Activated CD8-positive, alpha-beta T cell treated with anti-CD3 and anti-CD28 coated beads for 36 hours (primary cell): ENCODE measurements at regions of chr16 and their contacts with region 1.

Region 1: DNA sequence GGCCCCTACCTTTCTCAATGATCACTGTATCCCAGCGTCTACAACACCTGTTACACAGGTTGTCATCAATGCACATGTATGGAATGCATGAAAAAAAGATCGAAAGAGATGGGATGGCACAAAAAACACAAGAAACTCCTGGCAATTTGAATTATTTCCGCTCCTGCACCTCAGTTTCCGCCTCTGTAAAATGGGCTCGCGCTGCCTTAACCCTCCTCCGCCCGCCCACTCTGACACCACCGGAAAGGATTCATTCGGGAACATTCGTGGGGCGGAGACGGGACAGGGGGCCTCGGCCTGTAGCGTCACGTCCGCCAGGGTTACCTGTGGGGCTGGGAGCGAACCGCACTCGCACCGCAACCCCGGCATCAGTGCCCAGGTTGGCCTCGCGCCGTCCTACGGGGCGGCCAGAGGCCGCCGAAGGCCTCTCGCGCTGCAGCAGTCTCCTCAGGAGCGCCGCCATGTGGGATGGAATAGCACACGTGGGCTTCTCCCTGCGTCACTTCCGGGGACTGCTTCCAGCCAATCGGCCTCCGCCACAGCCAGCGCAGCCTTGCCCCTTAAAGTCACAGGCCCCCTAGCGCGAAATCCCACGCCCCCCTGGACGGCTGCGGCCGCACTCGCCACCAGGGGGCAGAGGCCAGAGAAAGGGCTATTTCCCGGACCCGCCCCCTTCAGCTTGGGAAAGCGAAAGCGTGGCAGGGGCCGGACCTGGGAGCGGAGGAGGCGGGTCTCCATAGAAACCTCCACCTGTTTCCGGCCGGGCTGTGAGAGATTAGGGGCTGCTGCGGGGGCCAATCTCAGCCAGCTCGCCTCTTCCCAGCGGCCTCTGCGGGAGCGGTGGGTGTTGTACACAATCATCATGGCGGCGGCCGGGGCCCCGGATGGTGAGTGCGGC is at the starts of genes EARS2 and UBFD1:
- DNase-seq: peak; percentile 99
- ATAC-seq: peak; percentile 91
- H3K4me3 Mint-ChIP-seq: peak within 1 kb of the TSS; percentile 97
- H3K27ac Mint-ChIP-seq: peak within 1 kb of the TSS; percentile 90
- H3K4me1 Mint-ChIP-seq: peaks cover 49% of the 10 kb centered on the region
- H3K27me3 Mint-ChIP-seq: no peaks in the 10 kb centered on the region
- CTCF ChIP-seq: peak; percentile 83
- total RNA-seq, gene EARS2: 25.7 to 29.1 TPM
- total RNA-seq, gene UBFD1: 51.8 to 54.1 TPM

Region 2: DNA sequence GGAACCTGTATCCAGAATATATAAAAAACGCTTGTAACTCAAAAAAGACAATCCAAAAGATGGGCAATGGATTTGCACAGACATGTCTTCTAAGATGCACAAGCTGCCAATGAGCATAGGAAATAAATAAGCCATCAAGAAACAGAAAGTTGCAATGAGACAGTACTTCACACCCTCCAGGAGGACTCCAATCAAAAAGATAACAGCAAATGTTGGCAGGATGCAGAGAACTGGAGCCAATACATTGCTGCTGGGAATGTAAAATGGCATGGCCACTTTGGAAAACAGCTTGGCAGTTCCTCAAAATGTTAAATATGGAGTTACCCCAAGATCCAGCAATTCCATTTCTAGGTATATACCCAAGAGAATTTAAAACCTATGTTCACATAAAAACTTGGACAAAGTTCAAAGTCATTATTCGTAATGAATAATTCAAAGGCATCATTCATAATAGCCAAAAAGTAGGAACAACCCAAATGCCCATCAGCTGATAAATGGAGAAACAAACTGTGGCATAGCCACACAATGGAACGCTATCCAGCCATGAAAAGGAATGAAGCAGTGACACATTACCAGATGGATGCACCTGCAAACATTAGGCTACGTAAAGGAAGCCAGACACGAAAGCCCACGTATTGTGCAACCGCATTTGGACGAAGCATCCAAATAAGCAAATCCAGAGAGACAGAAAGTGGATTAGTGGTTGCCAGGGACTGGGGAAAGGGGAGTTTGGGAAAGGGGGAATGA is 72.4 kb before region 1 on chr16:
- CTCF ChIA-PET with region 1: no interaction called
- POLR2A ChIA-PET with region 1: no interaction called
- intact Hi-C with region 1: no loop called
- DNase-seq: no peak
- ATAC-seq: no peak
- H3K4me3 Mint-ChIP-seq: no peak overlapping the region
- H3K27ac Mint-ChIP-seq: no peak overlapping the region
- H3K4me1 Mint-ChIP-seq: peaks cover 3% of the 10 kb centered on the region
- H3K27me3 Mint-ChIP-seq: no peaks in the 10 kb centered on the region
- CTCF ChIP-seq: no peak

Region 3: DNA sequence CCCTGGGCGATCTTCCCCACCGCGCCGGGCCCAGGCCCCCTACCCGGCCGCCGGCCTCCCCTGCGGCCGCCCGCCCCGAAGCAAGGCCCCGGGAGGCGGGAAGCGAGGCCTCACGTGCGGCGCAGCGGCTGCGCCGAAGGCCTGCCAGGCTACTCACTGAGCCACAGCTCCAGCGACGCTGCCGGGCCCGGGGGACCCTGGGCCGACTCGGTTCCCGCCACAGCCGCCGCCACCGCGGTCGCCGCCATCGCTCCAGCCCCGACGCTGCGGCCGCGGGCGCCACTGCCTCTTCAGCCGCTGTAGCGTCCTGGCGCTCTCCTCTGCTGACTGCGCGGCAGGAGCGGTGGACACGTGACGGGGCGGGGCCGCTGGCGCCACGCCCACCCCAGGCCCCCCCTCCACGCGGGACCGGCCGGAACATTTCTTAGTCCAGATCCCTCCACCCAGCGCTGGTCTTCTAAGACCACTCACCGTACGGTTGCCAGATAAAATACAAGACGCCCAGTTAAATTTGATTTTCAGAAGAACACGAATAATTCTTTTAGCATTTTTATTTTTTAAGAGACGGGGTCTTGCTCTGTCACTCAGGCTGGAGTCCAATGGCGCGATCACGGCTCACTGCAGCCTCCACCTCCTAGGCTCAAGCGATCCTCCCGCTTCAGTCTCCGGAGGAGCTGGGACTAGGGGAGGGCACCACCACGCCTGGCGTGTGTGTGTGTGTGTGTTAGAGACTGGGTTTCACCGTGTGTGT is 46.8 kb before region 1 on chr16 and contains the start of gene GGA2:
- CTCF ChIA-PET with region 1: interaction called, 4 read pairs
- POLR2A ChIA-PET with region 1: interaction called, 11 read pairs
- intact Hi-C with region 1: no loop called
- DNase-seq: peak; percentile 77
- ATAC-seq: peak; percentile 83
- H3K4me3 Mint-ChIP-seq: peak within 1 kb of the TSS; percentile 92
- H3K27ac Mint-ChIP-seq: peak within 1 kb of the TSS; percentile 86
- H3K4me1 Mint-ChIP-seq: peaks cover 43% of the 10 kb centered on the region
- H3K27me3 Mint-ChIP-seq: no peaks in the 10 kb centered on the region
- CTCF ChIP-seq: no peak
- total RNA-seq, gene GGA2: 91.0 to 96.9 TPM

Region 4: DNA sequence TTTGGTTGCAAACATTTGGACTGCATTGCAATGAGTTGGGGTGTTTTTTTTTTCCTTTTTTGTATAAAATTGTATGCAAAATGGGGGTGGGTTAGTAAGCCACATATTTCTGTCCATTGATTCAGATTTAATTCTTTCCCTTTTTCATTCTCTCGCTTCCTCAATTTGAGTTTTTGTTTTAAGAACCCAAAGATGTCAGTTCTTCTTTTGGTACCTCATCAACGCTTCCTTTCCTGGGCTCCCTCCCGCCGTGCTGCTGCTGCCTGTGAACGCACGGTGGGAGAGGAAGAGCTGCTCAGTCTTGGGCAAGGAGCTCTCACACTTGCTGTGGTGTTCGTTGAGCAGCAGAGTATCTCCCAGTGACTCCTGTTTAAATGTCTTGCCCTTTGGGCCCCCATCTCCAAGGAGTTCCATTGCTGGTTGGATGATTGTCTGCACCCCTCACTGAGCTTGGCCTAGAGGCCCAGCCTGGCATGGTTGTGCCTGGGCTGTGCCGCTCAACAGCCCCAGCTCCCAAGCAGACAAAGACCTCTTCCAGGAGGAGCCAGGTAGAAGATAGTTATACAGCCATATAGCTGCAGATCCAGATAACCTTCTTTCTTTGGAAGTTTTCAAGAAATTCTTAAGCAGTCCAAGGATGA is 14.0 kb after region 1 on chr16:
- CTCF ChIA-PET with region 1: interaction called, 4 read pairs
- POLR2A ChIA-PET with region 1: interaction called, 12 read pairs
- intact Hi-C with region 1: no loop called
- DNase-seq: no peak
- ATAC-seq: no peak
- H3K4me3 Mint-ChIP-seq: no peak overlapping the region
- H3K27ac Mint-ChIP-seq: no peak overlapping the region
- H3K4me1 Mint-ChIP-seq: no peaks in the 10 kb centered on the region
- H3K27me3 Mint-ChIP-seq: no peaks in the 10 kb centered on the region
- CTCF ChIP-seq: no peak

Region 5: GRCh38 chr16:23584186-23585076 is 27.3 kb after region 1 on chr16:
- CTCF ChIA-PET with region 1: no interaction called
- POLR2A ChIA-PET with region 1: no interaction called
- intact Hi-C with region 1: no loop called
- DNase-seq: no peak
- ATAC-seq: no peak
- H3K4me3 Mint-ChIP-seq: no peak overlapping the region
- H3K27ac Mint-ChIP-seq: peak overlapping the region; percentile 3
- H3K4me1 Mint-ChIP-seq: no peaks in the 10 kb centered on the region
- H3K27me3 Mint-ChIP-seq: no peaks in the 10 kb centered on the region
- CTCF ChIP-seq: no peak

Region 6: DNA sequence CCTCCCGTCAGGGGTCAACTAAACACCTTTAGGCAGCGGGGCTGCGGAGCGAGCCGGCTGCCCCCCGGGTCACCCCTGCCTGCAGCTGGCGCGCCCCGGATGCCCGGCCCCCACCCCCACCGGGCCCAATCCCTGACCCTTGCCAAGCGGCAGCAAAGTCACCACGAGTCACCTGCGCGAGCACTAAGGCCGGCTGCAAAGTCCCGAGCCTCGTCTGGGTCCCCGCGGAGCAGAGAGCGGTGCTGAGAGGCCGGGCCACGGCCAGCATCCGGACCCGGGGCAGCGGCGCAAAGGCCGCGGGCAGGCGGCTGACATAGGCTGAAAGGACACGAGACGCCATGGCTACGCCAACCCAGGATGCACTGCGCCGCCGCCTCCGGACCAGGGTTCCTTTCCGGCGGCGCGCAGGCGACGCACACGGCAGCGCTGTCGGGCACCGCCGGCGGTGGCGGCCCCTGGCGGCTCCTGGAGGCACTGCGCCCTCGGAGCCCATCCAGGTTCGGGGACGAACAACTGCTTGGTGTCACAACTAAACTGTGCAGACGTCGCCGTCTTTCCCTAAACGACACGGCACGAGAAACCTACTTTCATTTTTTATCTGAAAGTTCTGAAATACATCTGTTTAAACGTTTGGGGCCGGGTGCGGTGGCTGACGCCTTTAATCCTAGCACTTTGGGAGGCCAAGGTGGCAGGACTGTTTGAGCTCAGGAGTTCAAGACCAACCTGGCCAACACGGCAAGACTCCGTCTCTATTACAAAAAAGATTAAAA is 39.0 kb after region 1 on chr16 and contains the start of gene NDUFAB1:
- CTCF ChIA-PET with region 1: interaction called, 10 read pairs
- POLR2A ChIA-PET with region 1: no interaction called
- intact Hi-C with region 1: no loop called
- DNase-seq: peak; percentile 93
- ATAC-seq: peak; percentile 99
- H3K4me3 Mint-ChIP-seq: peak within 1 kb of the TSS; percentile 85
- H3K27ac Mint-ChIP-seq: peak within 1 kb of the TSS; percentile 82
- H3K4me1 Mint-ChIP-seq: peaks cover 27% of the 10 kb centered on the region
- H3K27me3 Mint-ChIP-seq: no peaks in the 10 kb centered on the region
- CTCF ChIP-seq: peak; percentile 95
- total RNA-seq, gene NDUFAB1: 157 to 162 TPM

Region 7: GRCh38 chr16:23847948-23848347 is 290.8 kb after region 1 on chr16:
- CTCF ChIA-PET with region 1: no interaction called
- POLR2A ChIA-PET with region 1: no interaction called
- intact Hi-C with region 1: no loop called
- DNase-seq: peak; percentile 88
- ATAC-seq: peak; percentile 96
- H3K4me3 Mint-ChIP-seq: peak overlapping the region; percentile 20
- H3K27ac Mint-ChIP-seq: peak overlapping the region; percentile 92
- H3K4me1 Mint-ChIP-seq: peaks cover 87% of the 10 kb centered on the region
- H3K27me3 Mint-ChIP-seq: no peaks in the 10 kb centered on the region
- CTCF ChIP-seq: no peak